ENCODE measurements at regions of chrX and their contacts with region 1.

Region 1: GRCh38 chrX:143536176-143536575 is 18.9 kb upstream of the SPANXN3 start:
- DNase-seq: no peak
- H3K4me3 ChIP-seq: no peak overlapping the region
- H3K27ac ChIP-seq: no peak overlapping the region
- H3K4me1 ChIP-seq: no peaks in the 10 kb centered on the region
- H3K27me3 ChIP-seq: peaks cover 0 to 14% of the 10 kb centered on the region in 2 donors
- CTCF ChIP-seq: no peak
- POLR2A ChIP-seq: no peak

Region 2: GRCh38 chrX:143094417-143095110 is 441.6 kb before region 1 on chrX:
- intact Hi-C with region 1: no loop called
- DNase-seq: no peak
- H3K4me3 ChIP-seq: no peak overlapping the region
- H3K27ac ChIP-seq: no peak overlapping the region
- H3K4me1 ChIP-seq: no peaks in the 10 kb centered on the region
- H3K27me3 ChIP-seq: peaks cover 0 to 4% of the 10 kb centered on the region in 2 donors
- CTCF ChIP-seq: no peak
- POLR2A ChIP-seq: no peak

Region 3: DNA sequence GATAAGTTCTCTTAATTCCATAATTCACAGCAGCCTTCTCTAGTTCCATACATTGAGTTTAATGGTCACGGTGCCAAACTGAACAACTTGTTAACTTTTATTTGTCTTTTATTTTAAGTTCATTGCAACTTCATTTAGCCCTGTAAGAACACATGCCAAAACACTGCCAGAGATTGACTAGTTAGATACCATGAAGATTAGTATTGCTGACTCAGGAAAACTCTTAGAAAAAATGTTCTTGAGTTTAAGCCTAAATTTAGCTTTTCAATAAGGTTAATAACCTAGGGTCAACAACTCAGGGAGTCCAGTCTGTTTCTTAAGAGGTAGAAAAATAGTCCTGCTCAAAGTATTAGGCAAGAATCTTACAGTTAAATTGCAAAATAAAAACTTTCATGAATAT is 158.7 kb after region 1 on chrX:
- intact Hi-C with region 1: loop called (anchors 5 kb)
- DNase-seq: no peak
- H3K4me3 ChIP-seq: no peak overlapping the region
- H3K27ac ChIP-seq: no peak overlapping the region
- H3K4me1 ChIP-seq: no peaks in the 10 kb centered on the region
- H3K27me3 ChIP-seq: peaks cover 0 to 13% of the 10 kb centered on the region in 2 donors
- CTCF ChIP-seq: no peak
- POLR2A ChIP-seq: no peak